CD8-positive, alpha-beta T cell (primary cell): ENCODE measurements at regions of chr3 and their contacts with region 1.

Region 1: GRCh38 chr3:152268555-152269425 is at the start of gene MBNL1:
- DNase-seq: peak; percentile 67 to 95 (median 84)
- ATAC-seq: peak; percentile 54
- H3K4me3 ChIP-seq: peak within 1 kb of the TSS; percentile 92 to 94
- H3K4me3 Mint-ChIP-seq: peak within 1 kb of the TSS; percentile 96
- H3K27ac ChIP-seq: peak within 1 kb of the TSS; percentile 89 to 96
- H3K27ac Mint-ChIP-seq: peak within 1 kb of the TSS; percentile 95
- H3K4me1 ChIP-seq: peaks cover 50% of the 10 kb centered on the region
- H3K4me1 Mint-ChIP-seq: peaks cover 61% of the 10 kb centered on the region
- H3K27me3 ChIP-seq: no peaks in the 10 kb centered on the region
- H3K27me3 Mint-ChIP-seq: no peaks in the 10 kb centered on the region
- CTCF ChIP-seq: no peak
- total RNA-seq, gene MBNL1: 515 to 529 TPM

Region 2: GRCh38 chr3:152151216-152151876 is 117.4 kb before region 1 on chr3:
- CTCF ChIA-PET with region 1: no interaction called
- POLR2A ChIA-PET with region 1: no interaction called
- intact Hi-C with region 1: no loop called
- DNase-seq: no peak
- ATAC-seq: no peak
- H3K4me3 ChIP-seq: no peak overlapping the region
- H3K4me3 Mint-ChIP-seq: no peak overlapping the region
- H3K27ac ChIP-seq: no peak overlapping the region
- H3K27ac Mint-ChIP-seq: no peak overlapping the region
- H3K4me1 ChIP-seq: no peaks in the 10 kb centered on the region
- H3K4me1 Mint-ChIP-seq: peaks cover 2% of the 10 kb centered on the region
- H3K27me3 ChIP-seq: no peaks in the 10 kb centered on the region
- H3K27me3 Mint-ChIP-seq: no peaks in the 10 kb centered on the region
- CTCF ChIP-seq: no peak

Region 3: GRCh38 chr3:152193673-152194267 is 75.0 kb before region 1 on chr3:
- CTCF ChIA-PET with region 1: no interaction called
- POLR2A ChIA-PET with region 1: interaction called, 63 read pairs
- intact Hi-C with region 1: loop called in 1 of 2 experiments (anchors 2 kb)
- DNase-seq: peak in 4 of 9 experiments; percentile 20 to 82 (median 51)
- ATAC-seq: peak; percentile 65
- H3K4me3 ChIP-seq: peak overlapping the region; percentile 54 to 59
- H3K4me3 Mint-ChIP-seq: peak overlapping the region; percentile 83
- H3K27ac ChIP-seq: peak overlapping the region; percentile 62 to 80
- H3K27ac Mint-ChIP-seq: peak overlapping the region; percentile 90
- H3K4me1 ChIP-seq: peaks cover 65% of the 10 kb centered on the region
- H3K4me1 Mint-ChIP-seq: peaks cover 76% of the 10 kb centered on the region
- H3K27me3 ChIP-seq: no peaks in the 10 kb centered on the region
- H3K27me3 Mint-ChIP-seq: no peaks in the 10 kb centered on the region
- CTCF ChIP-seq: no peak

Region 4: DNA sequence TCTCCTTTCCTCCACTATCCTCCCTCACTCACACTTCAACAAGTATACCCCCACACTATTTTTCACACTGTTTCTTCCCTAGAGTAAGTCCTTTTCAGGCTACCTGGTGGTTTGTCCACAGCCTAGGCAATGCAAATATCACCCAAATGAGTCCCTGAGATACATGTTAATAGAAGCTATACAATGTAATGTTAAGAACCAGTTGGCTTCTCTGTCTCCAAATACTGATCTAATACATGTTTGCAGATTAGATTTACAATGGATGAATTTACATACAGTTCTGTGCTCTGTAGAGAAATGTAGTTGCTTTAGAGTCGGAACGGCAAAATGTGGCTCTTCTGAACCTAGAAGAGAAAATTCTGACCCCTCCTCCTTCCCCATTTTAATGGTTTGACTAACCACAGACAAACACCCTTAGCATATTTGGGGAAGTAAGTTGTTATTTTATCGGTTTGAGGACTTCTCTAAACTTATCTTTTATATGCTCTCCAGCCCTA is 63.6 kb before region 1 on chr3:
- CTCF ChIA-PET with region 1: no interaction called
- POLR2A ChIA-PET with region 1: interaction called, 63 read pairs
- intact Hi-C with region 1: loop called in 1 of 2 experiments (anchors 5 kb)
- DNase-seq: peak in 2 of 9 experiments; percentile 47 to 62
- ATAC-seq: peak; percentile 31
- H3K4me3 ChIP-seq: peak overlapping the region; percentile 44 to 53
- H3K4me3 Mint-ChIP-seq: peak overlapping the region; percentile 86
- H3K27ac ChIP-seq: peak overlapping the region; percentile 32 to 60
- H3K27ac Mint-ChIP-seq: peak overlapping the region; percentile 93
- H3K4me1 ChIP-seq: peaks cover 57% of the 10 kb centered on the region
- H3K4me1 Mint-ChIP-seq: peaks cover 73% of the 10 kb centered on the region
- H3K27me3 ChIP-seq: no peaks in the 10 kb centered on the region
- H3K27me3 Mint-ChIP-seq: no peaks in the 10 kb centered on the region
- CTCF ChIP-seq: no peak

Region 5: DNA sequence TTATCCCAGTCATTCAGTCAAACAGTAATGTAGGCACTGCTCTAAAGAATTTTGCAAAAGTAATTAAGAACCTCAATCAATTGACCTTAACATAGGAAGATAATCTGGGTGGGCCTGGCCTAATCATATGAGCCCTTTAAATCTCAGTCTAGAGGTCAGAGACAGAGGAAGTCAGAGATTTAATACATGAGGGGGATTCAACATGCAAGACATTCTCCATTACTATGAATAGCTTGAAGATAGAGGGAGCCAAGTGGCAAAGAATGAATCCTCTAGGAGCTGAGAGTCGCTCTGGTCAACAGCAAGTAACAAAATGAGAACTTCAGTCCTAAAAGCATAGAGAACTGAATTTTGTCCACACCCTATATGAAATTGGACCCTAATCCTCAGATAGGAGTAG is 39.1 kb before region 1 on chr3:
- CTCF ChIA-PET with region 1: no interaction called
- POLR2A ChIA-PET with region 1: interaction called, 15 read pairs
- intact Hi-C with region 1: loop called in 1 of 2 experiments (anchors 5 kb)
- DNase-seq: peak in 1 of 9 experiments; percentile 33
- ATAC-seq: no peak
- H3K4me3 ChIP-seq: no peak overlapping the region
- H3K4me3 Mint-ChIP-seq: no peak overlapping the region
- H3K27ac ChIP-seq: no peak overlapping the region
- H3K27ac Mint-ChIP-seq: no peak overlapping the region
- H3K4me1 ChIP-seq: peaks cover 47% of the 10 kb centered on the region
- H3K4me1 Mint-ChIP-seq: peaks cover 58% of the 10 kb centered on the region
- H3K27me3 ChIP-seq: no peaks in the 10 kb centered on the region
- H3K27me3 Mint-ChIP-seq: no peaks in the 10 kb centered on the region
- CTCF ChIP-seq: no peak

Region 6: GRCh38 chr3:152258448-152259393 is 10.1 kb before region 1 on chr3:
- CTCF ChIA-PET with region 1: interaction called, 3 read pairs
- POLR2A ChIA-PET with region 1: interaction called, 108 read pairs
- intact Hi-C with region 1: loop called (anchors 1 kb)
- DNase-seq: peak in 8 of 9 experiments; percentile 32 to 84 (median 67)
- ATAC-seq: peak; percentile 52
- H3K4me3 ChIP-seq: peak overlapping the region in 1 of 2 experiments; percentile 22
- H3K4me3 Mint-ChIP-seq: peak overlapping the region; percentile 72
- H3K27ac ChIP-seq: peak overlapping the region; percentile 49 to 78
- H3K27ac Mint-ChIP-seq: peak overlapping the region; percentile 98
- H3K4me1 ChIP-seq: peaks cover 80% of the 10 kb centered on the region
- H3K4me1 Mint-ChIP-seq: peaks cover 86% of the 10 kb centered on the region
- H3K27me3 ChIP-seq: no peaks in the 10 kb centered on the region
- H3K27me3 Mint-ChIP-seq: no peaks in the 10 kb centered on the region
- CTCF ChIP-seq: no peak

Region 7: GRCh38 chr3:152281133-152281713 is 12.4 kb after region 1 on chr3:
- CTCF ChIA-PET with region 1: interaction called, 3 read pairs
- POLR2A ChIA-PET with region 1: interaction called, 8 read pairs
- intact Hi-C with region 1: loop called in 1 of 2 experiments (anchors 1 kb)
- DNase-seq: peak in 1 of 9 experiments; percentile 41
- ATAC-seq: no peak
- H3K4me3 ChIP-seq: peak overlapping the region in 1 of 2 experiments; percentile 14
- H3K4me3 Mint-ChIP-seq: peak overlapping the region; percentile 63
- H3K27ac ChIP-seq: peak overlapping the region in 1 of 2 experiments; percentile 69
- H3K27ac Mint-ChIP-seq: peak overlapping the region; percentile 87
- H3K4me1 ChIP-seq: peaks cover 88% of the 10 kb centered on the region
- H3K4me1 Mint-ChIP-seq: peaks cover 84% of the 10 kb centered on the region
- H3K27me3 ChIP-seq: no peaks in the 10 kb centered on the region
- H3K27me3 Mint-ChIP-seq: no peaks in the 10 kb centered on the region
- CTCF ChIP-seq: no peak

Region 8: GRCh38 chr3:152444029-152444641 is 175.3 kb after region 1 on chr3:
- CTCF ChIA-PET with region 1: interaction called, 4 read pairs
- POLR2A ChIA-PET with region 1: interaction called, 6 read pairs
- intact Hi-C with region 1: loop called in 1 of 2 experiments (anchors 5 kb)
- DNase-seq: peak in 2 of 9 experiments; percentile 53 to 70
- ATAC-seq: peak; percentile 46
- H3K4me3 ChIP-seq: no peak overlapping the region
- H3K4me3 Mint-ChIP-seq: peak overlapping the region; percentile 0
- H3K27ac ChIP-seq: no peak overlapping the region
- H3K27ac Mint-ChIP-seq: peak overlapping the region; percentile 55
- H3K4me1 ChIP-seq: peaks cover 55% of the 10 kb centered on the region
- H3K4me1 Mint-ChIP-seq: peaks cover 73% of the 10 kb centered on the region
- H3K27me3 ChIP-seq: no peaks in the 10 kb centered on the region
- H3K27me3 Mint-ChIP-seq: no peaks in the 10 kb centered on the region
- CTCF ChIP-seq: peak; percentile 68